Breast epithelium (tissue), 4 donors: ENCODE measurements at regions of chr5 and their contacts with region 1.

Region 1: GRCh38 chr5:111892949-111893348 is 136.0 kb upstream of the NREP start:
- DNase-seq: no peak
- H3K4me3 ChIP-seq: no peak overlapping the region
- H3K27ac ChIP-seq: no peak overlapping the region
- H3K4me1 ChIP-seq: no peaks in the 10 kb centered on the region
- H3K27me3 ChIP-seq: no peaks in the 10 kb centered on the region
- CTCF ChIP-seq: no peak
- POLR2A ChIP-seq: no peak

Region 2: DNA sequence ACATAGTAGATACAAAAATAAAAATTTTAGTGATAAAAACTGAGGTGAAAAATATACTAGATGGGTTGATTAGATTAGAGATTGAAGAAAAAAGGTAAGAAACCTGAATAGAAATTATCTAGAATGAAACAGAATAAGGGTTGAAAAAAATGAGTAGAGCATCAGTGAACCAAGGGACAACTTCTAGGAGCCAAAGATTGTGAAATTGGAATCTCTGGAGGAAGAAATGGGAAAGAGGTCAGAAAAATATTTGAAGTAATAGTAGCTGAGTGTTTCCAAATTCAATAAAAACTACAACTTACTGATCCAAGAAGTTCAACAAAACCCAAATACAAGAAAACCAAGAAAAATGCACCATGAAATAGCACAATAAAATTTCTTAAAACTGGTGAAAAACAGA is 264.0 kb before region 1 on chr5:
- intact Hi-C with region 1: loop called (anchors 5 kb)
- DNase-seq: no peak
- H3K4me3 ChIP-seq: no peak overlapping the region
- H3K27ac ChIP-seq: no peak overlapping the region
- H3K4me1 ChIP-seq: no peaks in the 10 kb centered on the region
- H3K27me3 ChIP-seq: no peaks in the 10 kb centered on the region
- CTCF ChIP-seq: no peak
- POLR2A ChIP-seq: no peak

Region 3: DNA sequence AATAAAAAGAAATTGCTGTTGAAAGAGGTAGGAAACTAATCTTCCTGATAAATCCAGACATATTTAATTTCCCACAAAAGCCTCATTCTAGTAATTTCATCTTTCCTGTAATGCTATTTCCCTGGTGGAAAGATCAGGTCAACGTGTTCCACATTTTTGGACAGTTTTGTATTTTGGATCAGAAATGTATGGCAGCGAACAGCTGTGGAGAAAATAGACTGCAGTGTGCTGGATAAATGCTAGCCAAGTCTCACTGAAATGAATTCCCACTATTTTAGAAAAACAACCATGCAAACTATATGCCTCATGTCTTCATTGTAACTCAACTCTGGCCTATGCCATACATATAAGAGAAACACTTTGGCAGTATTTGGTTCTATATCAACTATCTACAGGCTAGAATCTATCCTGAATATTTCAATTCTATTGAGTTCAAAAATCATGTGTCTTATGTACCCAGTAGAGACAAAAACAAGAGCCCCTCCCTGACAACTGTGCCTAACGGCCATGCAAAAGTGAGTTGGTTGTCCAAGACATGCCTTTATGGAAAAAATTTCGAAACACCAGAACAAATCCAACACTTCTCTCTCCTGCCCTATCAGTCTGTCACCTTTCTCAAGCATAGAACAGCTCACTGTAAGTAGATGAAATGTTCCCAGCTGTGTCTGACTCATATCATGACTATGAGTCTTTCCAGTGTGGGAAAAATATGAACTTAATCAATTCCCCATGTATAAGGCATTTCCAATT is 55.3 kb after region 1 on chr5:
- intact Hi-C with region 1: no loop called
- DNase-seq: no peak
- H3K4me3 ChIP-seq: no peak overlapping the region
- H3K27ac ChIP-seq: no peak overlapping the region
- H3K4me1 ChIP-seq: no peaks in the 10 kb centered on the region
- H3K27me3 ChIP-seq: no peaks in the 10 kb centered on the region
- CTCF ChIP-seq: no peak
- POLR2A ChIP-seq: no peak